ENCODE measurements at regions of chr9 and their contacts with region 1.

Region 1: DNA sequence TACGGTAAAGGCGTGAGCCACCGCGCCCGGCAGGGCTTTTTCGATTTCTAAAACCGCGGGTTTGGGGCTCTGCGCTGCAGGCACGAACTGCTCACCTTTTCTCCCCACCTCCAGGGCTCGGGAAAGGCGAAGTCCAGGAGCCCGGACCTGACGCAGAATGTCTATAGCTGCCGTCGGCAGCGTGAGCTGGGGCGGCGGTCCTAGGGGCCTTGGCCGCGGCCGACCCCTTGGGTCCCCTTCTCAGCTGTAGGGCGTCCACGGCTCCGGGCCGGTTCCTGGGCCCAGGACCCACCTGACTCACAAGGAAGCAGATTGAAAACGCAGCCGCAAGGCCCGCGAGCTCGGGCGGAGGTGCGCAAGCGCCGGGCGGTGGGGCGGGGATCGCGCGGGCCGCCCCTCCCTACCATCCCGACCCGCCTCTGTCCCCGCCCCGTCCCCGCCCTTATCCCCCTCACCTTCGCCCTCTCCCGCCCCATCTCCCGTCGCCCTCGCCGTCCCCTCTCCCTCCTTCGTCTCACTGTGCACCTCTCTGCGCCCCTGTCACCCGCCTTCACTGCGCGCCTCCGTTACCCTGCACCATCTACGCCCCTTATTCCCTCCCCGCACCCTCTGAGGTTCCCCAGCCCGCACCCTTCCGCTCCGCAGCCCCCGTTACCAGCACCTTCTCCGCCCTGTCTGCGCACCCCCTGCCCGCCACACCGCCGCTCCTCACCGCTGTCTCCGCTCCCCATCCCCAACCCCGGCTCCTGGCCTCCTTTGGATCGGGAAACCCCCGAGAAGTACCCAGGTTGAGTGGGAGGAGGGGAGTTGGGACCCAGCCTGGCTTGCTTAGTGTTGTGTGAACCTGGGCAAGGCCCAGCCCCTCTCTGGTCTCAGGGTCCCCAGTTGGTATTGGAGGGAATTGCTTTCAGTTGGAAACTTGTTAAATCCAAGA is at the start of gene HDHD3:
- DNase-seq: peak; percentile 67 to 90
- H3K4me3 ChIP-seq: peak within 1 kb of the TSS; percentile 71 to 94
- H3K27ac ChIP-seq: peak within 1 kb of the TSS; percentile 82 to 85
- H3K4me1 ChIP-seq: peaks cover 0 to 20% (median 12%) of the 10 kb centered on the region in 4 donors
- H3K27me3 ChIP-seq: no peaks in the 10 kb centered on the region
- CTCF ChIP-seq: no peak

Region 2: GRCh38 chr9:113150670-113151611 is 226.0 kb before region 1 on chr9 and contains the start of gene SLC31A2:
- intact Hi-C with region 1: no loop called
- DNase-seq: peak; percentile 87 to 88
- H3K4me3 ChIP-seq: peak within 1 kb of the TSS; percentile 79 to 95
- H3K27ac ChIP-seq: peak within 1 kb of the TSS; percentile 77 to 82
- H3K4me1 ChIP-seq: peaks cover 0 to 23% (median 10%) of the 10 kb centered on the region in 4 donors
- H3K27me3 ChIP-seq: no peaks in the 10 kb centered on the region
- CTCF ChIP-seq: peak; percentile 14 to 25

Region 3: GRCh38 chr9:113317777-113318176 is 59.1 kb before region 1 on chr9:
- intact Hi-C with region 1: loop called (anchors 10 kb)
- DNase-seq: no peak
- H3K4me3 ChIP-seq: no peak overlapping the region
- H3K27ac ChIP-seq: no peak overlapping the region
- H3K4me1 ChIP-seq: peaks cover 0 to 11% (median 0%) of the 10 kb centered on the region in 4 donors
- H3K27me3 ChIP-seq: no peaks in the 10 kb centered on the region
- CTCF ChIP-seq: peak; percentile 13 to 17

Measured in tibial artery (tissue), 4 donors.